ENCODE measurements at regions of chrX and their contacts with region 1.

Region 1: GRCh38 chrX:154019633-154020528 is at the start of gene IRAK1:
- DNase-seq: peak; percentile 41 to 84 (median 66)
- ATAC-seq: peak in 3 of 4 donors; percentile 83 to 87 (median 85)
- H3K4me3 ChIP-seq: peak within 1 kb of the TSS; percentile 42 to 76 (median 62)
- H3K27ac ChIP-seq: peak within 1 kb of the TSS; percentile 57 to 92 (median 88)
- H3K4me1 ChIP-seq: peaks cover 0 to 25% (median 6%) of the 10 kb centered on the region in 12 donors
- H3K27me3 ChIP-seq: peaks cover 0 to 34% (median 0%) of the 10 kb centered on the region in 9 donors
- CTCF ChIP-seq: peak in 2 of 12 donors; percentile 6 to 10
- POLR2A ChIP-seq: no peak
- total RNA-seq, gene IRAK1: 22.0 to 79.2 (median 29.7) TPM

Region 2: GRCh38 chrX:153971450-153972367 is 48.2 kb before region 1 on chrX and contains the start of gene HCFC1:
- intact Hi-C with region 1: loop called in 1 of 10 experiments (anchors 5 kb)
- DNase-seq: peak; percentile 91 to 97 (median 93)
- ATAC-seq: peak; percentile 56 to 76 (median 72)
- H3K4me3 ChIP-seq: peak within 1 kb of the TSS; percentile 43 to 95 (median 90)
- H3K27ac ChIP-seq: peak within 1 kb of the TSS; percentile 94 to 100 (median 100)
- H3K4me1 ChIP-seq: peaks cover 0 to 57% (median 37%) of the 10 kb centered on the region in 12 donors
- H3K27me3 ChIP-seq: peaks cover 0 to 8% (median 0%) of the 10 kb centered on the region in 9 donors
- CTCF ChIP-seq: no peak
- POLR2A ChIP-seq: peak; percentile 3 to 38
- total RNA-seq, gene HCFC1: 22.7 to 72.6 (median 34.8) TPM

Region 3: GRCh38 chrX:154046031-154046781 is 26.3 kb after region 1 on chrX:
- intact Hi-C with region 1: loop called in 2 of 10 experiments (anchors 2 to 5 kb)
- DNase-seq: peak; percentile 26 to 63 (median 47)
- ATAC-seq: peak; percentile 44 to 77 (median 64)
- H3K4me3 ChIP-seq: no peak overlapping the region
- H3K27ac ChIP-seq: peak overlapping the region in 11 of 12 donors; percentile 8 to 72 (median 46)
- H3K4me1 ChIP-seq: peaks cover 0 to 96% (median 50%) of the 10 kb centered on the region in 12 donors
- H3K27me3 ChIP-seq: peaks cover 0 to 39% (median 0%) of the 10 kb centered on the region in 9 donors
- CTCF ChIP-seq: peak in 4 of 12 donors; percentile 8 to 45 (median 22)
- POLR2A ChIP-seq: no peak

Region 4: GRCh38 chrX:154051201-154051810 is 31.4 kb after region 1 on chrX:
- intact Hi-C with region 1: loop called in 3 of 10 experiments (anchors 2 to 5 kb)
- DNase-seq: peak in 4 of 5 donors; percentile 54 to 73 (median 64)
- ATAC-seq: peak in 3 of 4 donors; percentile 48 to 60 (median 58)
- H3K4me3 ChIP-seq: no peak overlapping the region
- H3K27ac ChIP-seq: peak overlapping the region in 2 of 12 donors; percentile 19 to 50
- H3K4me1 ChIP-seq: peaks cover 0 to 59% (median 34%) of the 10 kb centered on the region in 12 donors
- H3K27me3 ChIP-seq: peaks cover 0 to 26% (median 0%) of the 10 kb centered on the region in 9 donors
- CTCF ChIP-seq: peak; percentile 52 to 80 (median 66)
- POLR2A ChIP-seq: no peak

Region 5: DNA sequence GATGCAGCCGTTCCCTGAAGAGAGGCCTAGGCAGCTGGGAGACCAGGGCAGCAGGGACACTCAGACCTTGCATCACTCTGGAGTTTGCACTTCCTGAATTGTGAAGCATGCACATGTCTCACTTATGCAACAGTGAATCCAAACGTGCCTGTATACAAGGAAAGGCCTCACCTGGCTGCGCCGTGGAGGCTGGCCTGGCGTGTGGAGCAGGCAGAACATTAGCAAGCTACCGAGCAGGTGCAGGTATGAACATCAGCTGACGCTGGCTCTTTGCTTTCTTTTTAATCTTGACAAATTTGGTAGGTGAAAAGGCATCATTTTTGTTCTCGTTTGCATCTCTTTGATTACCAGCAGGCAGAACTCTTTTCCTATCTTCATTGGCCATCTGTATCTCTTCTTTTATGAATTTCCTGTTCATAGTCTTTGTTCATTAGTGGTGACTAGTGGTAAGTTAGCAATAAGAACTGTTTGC is 36.9 kb after region 1 on chrX:
- intact Hi-C with region 1: loop called in 2 of 10 experiments (anchors 5 kb)
- DNase-seq: no peak
- ATAC-seq: peak in 2 of 4 donors; percentile 47 to 49
- H3K4me3 ChIP-seq: no peak overlapping the region
- H3K27ac ChIP-seq: no peak overlapping the region
- H3K4me1 ChIP-seq: peaks cover 0 to 55% (median 29%) of the 10 kb centered on the region in 12 donors
- H3K27me3 ChIP-seq: peaks cover 0 to 42% (median 0%) of the 10 kb centered on the region in 9 donors
- CTCF ChIP-seq: no peak
- POLR2A ChIP-seq: no peak

Region 6: DNA sequence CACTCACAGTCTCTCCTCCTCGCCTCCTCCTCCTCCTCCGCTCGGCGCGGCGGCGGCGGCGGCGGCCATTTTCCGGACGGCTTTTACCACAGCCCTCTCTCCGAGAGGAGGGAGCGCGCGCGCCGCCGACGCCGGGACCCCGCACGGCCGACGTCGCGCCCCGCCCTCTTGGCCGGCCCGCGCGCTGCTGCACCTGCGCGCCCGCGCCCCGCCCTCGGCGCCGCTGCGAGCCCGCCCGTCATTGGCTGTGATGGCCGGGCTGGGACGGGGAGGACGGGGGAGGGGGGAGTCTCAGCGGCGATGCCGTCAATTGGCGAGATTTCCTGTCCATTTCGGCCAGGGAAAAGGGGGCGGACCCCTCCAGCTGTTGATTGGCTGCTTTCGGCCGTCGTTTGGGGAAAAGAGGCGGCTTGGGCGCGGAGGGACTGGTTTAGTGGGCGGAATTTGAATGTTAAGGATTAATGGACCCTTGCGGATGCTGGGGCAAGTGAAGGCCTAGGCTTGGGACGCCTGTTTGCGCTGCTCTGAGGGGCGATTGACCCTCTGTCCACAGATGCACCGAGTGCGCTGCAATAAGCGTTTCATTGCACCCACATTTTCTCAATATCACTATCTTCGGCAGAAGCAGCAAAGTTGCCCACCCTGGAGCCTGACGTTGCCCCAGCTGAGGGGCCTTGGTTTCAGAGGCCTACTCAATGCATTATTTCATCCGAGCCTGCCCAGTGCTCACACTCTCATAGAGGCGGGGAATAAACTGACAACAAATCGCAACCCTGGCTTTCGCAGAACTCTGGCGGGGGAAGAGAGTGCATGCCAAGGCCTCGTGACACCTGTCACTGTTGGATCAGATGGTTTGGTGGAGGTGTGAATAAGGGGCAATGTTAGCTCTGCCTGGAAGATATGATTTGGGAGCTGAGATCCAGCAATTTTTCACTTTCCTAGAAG is 78.0 kb after region 1 on chrX and contains the start of gene MECP2:
- intact Hi-C with region 1: loop called in 2 of 10 experiments (anchors 2 to 10 kb)
- DNase-seq: peak; percentile 91 to 94 (median 92)
- ATAC-seq: peak; percentile 82 to 95 (median 93)
- H3K4me3 ChIP-seq: peak within 1 kb of the TSS; percentile 54 to 94 (median 78)
- H3K27ac ChIP-seq: peak within 1 kb of the TSS; percentile 90 to 99 (median 96)
- H3K4me1 ChIP-seq: peaks cover 0 to 41% (median 26%) of the 10 kb centered on the region in 12 donors
- H3K27me3 ChIP-seq: peaks cover 0 to 32% (median 0%) of the 10 kb centered on the region in 9 donors
- CTCF ChIP-seq: no peak
- POLR2A ChIP-seq: no peak
- total RNA-seq, gene MECP2: 24.6 to 83.3 (median 37.1) TPM